ENCODE measurements at regions of chr15 and their contacts with region 1.

Region 1: GRCh38 chr15:44738340-44738984 is 2.1 kb downstream of the TRIM69 start:
- DNase-seq: no peak
- H3K4me3 Mint-ChIP-seq: peak overlapping the region; percentile 11
- H3K27ac Mint-ChIP-seq: peak overlapping the region; percentile 73
- H3K4me1 Mint-ChIP-seq: peaks cover 59% of the 10 kb centered on the region
- H3K27me3 Mint-ChIP-seq: no peaks in the 10 kb centered on the region

Region 2: DNA sequence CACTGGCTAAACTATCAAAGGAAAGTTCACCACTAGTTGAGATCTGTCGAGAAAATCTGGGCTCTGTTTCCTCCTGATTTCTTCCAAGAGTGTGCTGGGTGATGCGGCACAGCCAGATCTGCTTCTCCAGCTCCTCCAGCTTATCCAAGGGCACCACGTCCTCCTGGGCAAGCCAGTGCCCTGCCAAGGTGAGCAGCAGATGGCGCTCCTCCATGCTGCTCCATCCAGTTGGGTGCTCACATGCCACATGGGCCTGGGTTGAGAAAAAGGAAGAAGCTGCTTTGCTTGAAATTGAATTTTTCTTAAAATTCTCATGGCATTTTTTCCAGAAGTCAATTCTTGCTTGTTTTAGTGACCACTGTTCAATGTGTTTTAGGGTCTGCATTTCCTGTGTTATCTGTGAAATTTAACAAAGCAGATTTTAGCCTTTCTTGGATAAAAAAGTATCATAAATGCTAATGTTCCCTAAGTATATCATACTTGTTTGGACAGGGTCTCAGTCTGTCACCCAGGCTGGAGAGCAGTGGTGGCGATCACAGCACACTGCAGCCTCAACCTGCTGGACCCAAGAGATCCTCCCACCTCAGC is 154.2 kb before region 1 on chr15:
- CTCF ChIA-PET with region 1: interaction called, 57 read pairs
- DNase-seq: peak; percentile 70
- H3K4me3 Mint-ChIP-seq: no peak overlapping the region
- H3K27ac Mint-ChIP-seq: peak overlapping the region; percentile 50
- H3K4me1 Mint-ChIP-seq: peaks cover 4% of the 10 kb centered on the region
- H3K27me3 Mint-ChIP-seq: no peaks in the 10 kb centered on the region

Region 3: GRCh38 chr15:44593042-44593736 is 145.3 kb before region 1 on chr15:
- CTCF ChIA-PET with region 1: interaction called, 57 read pairs
- DNase-seq: peak; percentile 39
- H3K4me3 Mint-ChIP-seq: no peak overlapping the region
- H3K27ac Mint-ChIP-seq: peak overlapping the region; percentile 38
- H3K4me1 Mint-ChIP-seq: peaks cover 29% of the 10 kb centered on the region
- H3K27me3 Mint-ChIP-seq: no peaks in the 10 kb centered on the region

Region 4: GRCh38 chr15:45179221-45179985 is 440.9 kb after region 1 on chr15:
- CTCF ChIA-PET with region 1: no interaction called
- DNase-seq: peak; percentile 48
- H3K4me3 Mint-ChIP-seq: no peak overlapping the region
- H3K27ac Mint-ChIP-seq: no peak overlapping the region
- H3K4me1 Mint-ChIP-seq: peaks cover 8% of the 10 kb centered on the region
- H3K27me3 Mint-ChIP-seq: peaks cover 4% of the 10 kb centered on the region

Measured in activated naive CD4-positive, alpha-beta T cell treated with anti-CD3 and anti-CD28 coated beads, Interleukin-2, amount 10 ng/mL, durations not matched to agents 7 days and 5 days (primary cell).